Cardiac septum (tissue), 1 donor: ENCODE measurements at regions of chr2 and their contacts with region 1.

Region 1: DNA sequence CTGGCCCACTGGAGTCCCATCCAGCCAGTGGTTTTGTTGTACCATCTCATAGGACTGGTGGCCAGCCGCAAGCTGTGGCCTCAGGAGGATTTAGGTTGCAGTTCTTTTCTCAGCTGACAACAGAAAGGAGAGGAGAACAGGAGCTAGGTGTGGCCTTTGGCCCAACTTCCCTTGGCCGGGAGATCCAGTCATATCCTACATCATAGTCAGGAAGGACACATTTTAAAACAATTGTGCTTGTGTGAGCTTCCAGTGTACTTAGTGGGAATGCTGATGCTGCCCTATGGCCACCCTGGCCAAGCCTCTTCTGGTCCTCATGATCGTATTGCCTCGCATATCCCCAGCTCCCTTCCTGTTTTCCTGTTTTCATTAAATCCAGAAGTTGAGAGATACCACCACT is 98.1 kb downstream of the WDSUB1 start:
- DNase-seq: no peak

Region 2: DNA sequence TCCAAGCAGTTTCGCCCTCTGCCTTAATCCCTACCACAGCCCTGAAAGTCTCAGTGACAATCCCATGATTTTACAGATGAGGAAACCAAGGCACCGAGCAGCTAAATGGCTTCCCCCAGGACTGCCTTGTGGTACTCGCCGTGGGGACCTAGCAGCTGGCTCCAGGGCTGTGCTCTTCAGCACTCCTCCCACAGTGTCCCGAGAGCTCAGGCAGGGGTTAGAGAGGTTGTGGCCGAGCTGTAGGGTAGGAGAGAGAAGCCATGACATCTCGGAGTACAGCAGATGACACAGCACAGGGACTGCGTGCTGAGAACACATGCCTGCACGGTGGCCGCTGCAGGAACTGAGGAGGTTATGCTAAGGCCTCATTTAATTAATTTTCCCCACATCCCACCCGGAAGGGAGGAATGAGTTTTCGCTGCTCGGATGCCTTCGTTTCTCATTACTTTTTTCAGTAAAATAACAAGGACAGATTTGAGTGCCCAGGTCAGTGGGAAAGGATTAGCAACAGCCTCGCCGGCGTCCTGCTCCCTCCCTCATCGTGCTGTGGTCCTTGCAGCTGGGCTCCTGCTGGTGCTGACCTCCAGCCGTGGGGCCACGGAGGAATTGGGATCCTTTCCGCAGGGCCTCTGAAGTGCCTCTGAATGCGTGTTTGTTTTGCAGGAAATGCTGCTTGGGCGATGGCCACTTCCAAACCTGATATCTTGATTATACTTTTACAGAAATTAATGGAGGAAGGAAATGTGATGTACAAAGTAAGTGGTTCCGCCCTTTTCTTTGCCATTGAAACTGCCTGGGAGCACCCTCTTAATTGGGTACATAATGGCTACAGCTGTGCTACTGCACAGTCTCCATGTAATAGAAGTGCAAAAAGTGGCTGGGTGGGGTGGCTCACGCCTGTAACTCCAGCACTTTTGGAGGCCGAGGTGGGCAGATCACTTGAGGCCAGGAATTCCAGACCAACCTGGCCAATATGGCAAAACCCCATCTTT is 36.9 kb after region 1 on chr2:
- intact Hi-C with region 1: loop called (anchors 2 kb)
- DNase-seq: no peak